ENCODE measurements at regions of chr16 and their contacts with region 1.

Region 1: GRCh38 chr16:74439685-74440084 is 18.4 kb upstream of the CLEC18B start:
- DNase-seq: no peak
- H3K4me3 ChIP-seq: no peak overlapping the region
- H3K27ac ChIP-seq: no peak overlapping the region
- H3K27me3 ChIP-seq: no peaks in the 10 kb centered on the region
- CTCF ChIP-seq: no peak

Region 2: GRCh38 chr16:73068541-73069401 is 1370.9 kb before region 1 on chr16:
- CTCF ChIA-PET with region 1: no interaction called
- POLR2A ChIA-PET with region 1: interaction called, 10 read pairs
- DNase-seq: peak; percentile 94
- H3K4me3 ChIP-seq: peak overlapping the region; percentile 21; the same call in 1 of the 2 replicates
- H3K27ac ChIP-seq: peak overlapping the region; percentile 100
- H3K27me3 ChIP-seq: no peaks in the 10 kb centered on the region
- CTCF ChIP-seq: 0 out of 2 replicates have a peak, but pooled peaks have one; percentile 6

Region 3: DNA sequence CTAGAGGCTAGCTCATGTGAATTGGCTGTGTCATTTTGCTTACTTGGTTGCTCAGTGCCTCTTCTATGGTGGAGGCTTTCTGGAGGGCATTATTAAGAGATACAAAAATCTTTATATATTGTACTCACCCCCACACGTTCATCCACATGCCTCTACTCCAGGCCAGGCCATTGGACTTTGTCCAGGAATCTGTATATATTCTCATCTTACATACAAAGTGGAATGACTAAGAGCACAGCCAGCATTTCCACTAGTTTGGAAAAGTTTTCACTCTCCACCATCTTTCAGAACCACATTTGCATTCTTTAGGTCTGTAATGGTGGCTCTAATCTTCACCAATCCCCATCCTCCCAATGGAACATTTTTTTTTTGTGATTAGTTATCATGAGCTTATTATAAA is 172.0 kb after region 1 on chr16:
- CTCF ChIA-PET with region 1: no interaction called
- POLR2A ChIA-PET with region 1: no interaction called
- DNase-seq: peak; percentile 83
- H3K4me3 ChIP-seq: no peak overlapping the region
- H3K27ac ChIP-seq: peak overlapping the region; percentile 85
- H3K27me3 ChIP-seq: no peaks in the 10 kb centered on the region
- CTCF ChIP-seq: no peak

Measured in AG04450 (cell line).